CD4-positive, alpha-beta memory T cell (primary cell): ENCODE measurements at regions of chr6 and their contacts with region 1.

Region 1: DNA sequence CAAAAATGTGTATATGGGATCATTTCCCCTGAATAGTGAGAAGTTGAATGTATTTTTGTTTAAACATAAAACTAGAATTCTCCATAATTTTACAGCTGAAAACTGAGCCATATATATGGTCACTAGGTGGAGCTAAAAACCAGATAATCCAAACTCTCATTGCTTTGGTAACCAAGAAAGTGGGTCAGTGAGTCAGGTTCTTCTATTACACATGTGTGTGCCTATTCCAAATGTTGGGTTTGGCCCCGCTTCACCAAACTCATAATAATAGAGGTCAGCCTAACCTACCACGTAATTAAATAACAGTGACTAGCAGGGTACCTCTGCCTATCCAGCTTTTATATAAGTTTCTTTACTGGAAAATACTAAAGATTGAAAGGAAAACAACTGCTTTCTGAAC is 19.3 kb upstream of the RNGTT start:
- DNase-seq: peak in 4 of 5 donors; percentile 55 to 66 (median 62)
- H3K4me3 ChIP-seq: no peak overlapping the region
- H3K4me3 Mint-ChIP-seq: no peak overlapping the region
- H3K27ac ChIP-seq: no peak overlapping the region
- H3K27ac Mint-ChIP-seq: no peak overlapping the region
- H3K4me1 ChIP-seq: no peaks in the 10 kb centered on the region
- H3K4me1 Mint-ChIP-seq: no peaks in the 10 kb centered on the region
- H3K27me3 ChIP-seq: no peaks in the 10 kb centered on the region
- H3K27me3 Mint-ChIP-seq: no peaks in the 10 kb centered on the region

Region 2: DNA sequence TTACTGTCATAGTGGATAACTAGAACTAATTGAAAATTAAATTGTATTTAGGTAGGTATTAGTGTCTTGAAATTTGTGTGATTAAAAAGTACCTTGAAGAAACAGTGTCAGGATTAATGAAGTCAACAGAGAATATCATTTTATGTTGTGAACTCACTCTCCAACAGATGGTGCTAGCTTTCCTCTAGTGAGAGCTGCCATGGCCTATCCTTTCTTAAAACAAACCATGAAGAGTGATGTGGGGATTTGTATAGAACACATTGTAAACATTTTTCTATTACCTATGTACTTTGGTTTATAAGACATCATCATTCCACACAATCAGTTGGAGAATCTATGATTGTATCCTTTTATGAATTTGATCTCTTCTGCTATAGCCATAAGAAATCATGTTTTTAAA is 139.9 kb after region 1 on chr6:
- CTCF ChIA-PET with region 1: interaction called, 5 read pairs
- POLR2A ChIA-PET with region 1: no interaction called
- intact Hi-C with region 1: loop called (anchors 2 kb)
- DNase-seq: peak in 3 of 5 donors; percentile 15 to 26 (median 19)
- H3K4me3 ChIP-seq: no peak overlapping the region
- H3K4me3 Mint-ChIP-seq: no peak overlapping the region
- H3K27ac ChIP-seq: no peak overlapping the region
- H3K27ac Mint-ChIP-seq: no peak overlapping the region
- H3K4me1 ChIP-seq: no peaks in the 10 kb centered on the region
- H3K4me1 Mint-ChIP-seq: peaks cover 1 to 8% (median 5%) of the 10 kb centered on the region in 4 donors
- H3K27me3 ChIP-seq: no peaks in the 10 kb centered on the region
- H3K27me3 Mint-ChIP-seq: no peaks in the 10 kb centered on the region

Region 3: DNA sequence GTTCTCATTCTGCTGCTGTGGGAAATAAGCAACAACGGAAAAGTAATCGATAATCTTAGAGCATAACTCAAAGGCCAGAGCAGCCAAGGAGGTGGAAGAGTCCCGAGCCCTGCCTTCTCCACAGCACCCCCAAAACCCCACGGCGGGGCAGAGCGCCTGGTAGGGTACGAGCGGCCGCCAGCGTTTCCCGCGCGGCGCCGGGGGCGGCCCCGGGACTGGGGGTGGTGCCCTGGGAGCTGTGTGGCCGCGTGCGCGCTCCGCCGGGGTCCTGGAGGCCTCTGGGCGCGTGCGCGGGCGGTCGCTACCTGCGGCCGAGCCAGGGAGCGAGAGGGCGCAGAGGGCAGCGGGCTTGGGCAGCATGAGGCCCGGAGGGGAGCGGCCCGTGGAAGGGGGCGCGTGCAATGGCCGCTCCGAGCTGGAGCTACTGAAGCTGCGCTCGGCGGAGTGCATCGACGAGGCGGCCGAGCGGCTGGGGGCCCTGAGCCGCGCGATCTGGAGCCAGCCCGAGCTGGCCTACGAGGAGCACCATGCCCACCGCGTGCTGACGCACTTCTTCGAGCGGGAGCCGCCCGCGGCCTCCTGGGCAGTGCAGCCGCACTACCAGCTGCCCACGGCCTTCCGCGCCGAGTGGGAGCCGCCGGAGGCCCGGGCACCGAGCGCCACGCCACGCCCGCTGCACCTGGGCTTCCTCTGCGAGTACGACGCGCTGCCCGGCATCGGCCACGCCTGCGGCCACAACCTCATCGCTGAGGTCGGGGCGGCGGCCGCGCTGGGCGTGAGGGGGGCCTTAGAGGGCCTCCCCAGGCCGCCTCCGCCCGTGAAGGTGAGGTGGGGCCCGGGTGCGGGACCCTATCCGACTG is 163.3 kb after region 1 on chr6 and contains the start of gene PM20D2:
- CTCF ChIA-PET with region 1: interaction called, 12 read pairs
- POLR2A ChIA-PET with region 1: interaction called, 3 read pairs
- intact Hi-C with region 1: loop called (anchors 1 kb)
- DNase-seq: peak; percentile 52 to 61 (median 57)
- H3K4me3 ChIP-seq: peak within 1 kb of the TSS; percentile 34 to 44
- H3K4me3 Mint-ChIP-seq: peak within 1 kb of the TSS; percentile 90 to 99 (median 96)
- H3K27ac ChIP-seq: peak within 1 kb of the TSS; percentile 66
- H3K27ac Mint-ChIP-seq: peak within 1 kb of the TSS; percentile 89 to 98 (median 94)
- H3K4me1 ChIP-seq: peaks cover 20% of the 10 kb centered on the region
- H3K4me1 Mint-ChIP-seq: peaks cover 18 to 35% (median 27%) of the 10 kb centered on the region in 4 donors
- H3K27me3 ChIP-seq: no peaks in the 10 kb centered on the region
- H3K27me3 Mint-ChIP-seq: no peaks in the 10 kb centered on the region
- total RNA-seq, gene PM20D2: 11.4 to 11.6 TPM

Region 4: GRCh38 chr6:89242574-89243330 is 260.0 kb after region 1 on chr6:
- CTCF ChIA-PET with region 1: interaction called, 76 read pairs
- POLR2A ChIA-PET with region 1: no interaction called
- intact Hi-C with region 1: loop called (anchors 1 kb)
- DNase-seq: peak in 4 of 5 donors; percentile 16 to 30 (median 24)
- H3K4me3 ChIP-seq: no peak overlapping the region
- H3K4me3 Mint-ChIP-seq: no peak overlapping the region
- H3K27ac ChIP-seq: no peak overlapping the region
- H3K27ac Mint-ChIP-seq: no peak overlapping the region
- H3K4me1 ChIP-seq: peaks cover 10% of the 10 kb centered on the region
- H3K4me1 Mint-ChIP-seq: peaks cover 9 to 16% (median 12%) of the 10 kb centered on the region in 4 donors
- H3K27me3 ChIP-seq: peaks cover 5% of the 10 kb centered on the region
- H3K27me3 Mint-ChIP-seq: peaks cover 2 to 4% of the 10 kb centered on the region in 2 donors

Region 5: GRCh38 chr6:89297695-89298351 is 315.1 kb after region 1 on chr6:
- CTCF ChIA-PET with region 1: interaction called, 11 read pairs
- POLR2A ChIA-PET with region 1: interaction called, 3 read pairs
- intact Hi-C with region 1: no loop called
- DNase-seq: peak; percentile 63 to 89 (median 71)
- H3K4me3 ChIP-seq: peak overlapping the region in 1 of 2 donors; percentile 23
- H3K4me3 Mint-ChIP-seq: peak overlapping the region; percentile 42 to 85 (median 78)
- H3K27ac ChIP-seq: peak overlapping the region; percentile 48
- H3K27ac Mint-ChIP-seq: peak overlapping the region; percentile 96 to 99 (median 97)
- H3K4me1 ChIP-seq: peaks cover 29% of the 10 kb centered on the region
- H3K4me1 Mint-ChIP-seq: peaks cover 18 to 37% (median 22%) of the 10 kb centered on the region in 4 donors
- H3K27me3 ChIP-seq: no peaks in the 10 kb centered on the region
- H3K27me3 Mint-ChIP-seq: no peaks in the 10 kb centered on the region

Region 6: GRCh38 chr6:89610149-89610642 is 627.5 kb after region 1 on chr6:
- CTCF ChIA-PET with region 1: interaction called, 24 read pairs
- POLR2A ChIA-PET with region 1: no interaction called
- intact Hi-C with region 1: loop called (anchors 1 kb)
- DNase-seq: peak; percentile 62 to 69 (median 65)
- H3K4me3 ChIP-seq: no peak overlapping the region
- H3K4me3 Mint-ChIP-seq: no peak overlapping the region
- H3K27ac ChIP-seq: no peak overlapping the region
- H3K27ac Mint-ChIP-seq: peak overlapping the region in 2 of 7 donors; percentile 14 to 25
- H3K4me1 ChIP-seq: no peaks in the 10 kb centered on the region
- H3K4me1 Mint-ChIP-seq: peaks cover 0 to 3% (median 0%) of the 10 kb centered on the region in 4 donors
- H3K27me3 ChIP-seq: no peaks in the 10 kb centered on the region
- H3K27me3 Mint-ChIP-seq: no peaks in the 10 kb centered on the region